Endothelial cell of umbilical vein (primary cell): ENCODE measurements at regions of chr1 and their contacts with region 1.

Region 1: DNA sequence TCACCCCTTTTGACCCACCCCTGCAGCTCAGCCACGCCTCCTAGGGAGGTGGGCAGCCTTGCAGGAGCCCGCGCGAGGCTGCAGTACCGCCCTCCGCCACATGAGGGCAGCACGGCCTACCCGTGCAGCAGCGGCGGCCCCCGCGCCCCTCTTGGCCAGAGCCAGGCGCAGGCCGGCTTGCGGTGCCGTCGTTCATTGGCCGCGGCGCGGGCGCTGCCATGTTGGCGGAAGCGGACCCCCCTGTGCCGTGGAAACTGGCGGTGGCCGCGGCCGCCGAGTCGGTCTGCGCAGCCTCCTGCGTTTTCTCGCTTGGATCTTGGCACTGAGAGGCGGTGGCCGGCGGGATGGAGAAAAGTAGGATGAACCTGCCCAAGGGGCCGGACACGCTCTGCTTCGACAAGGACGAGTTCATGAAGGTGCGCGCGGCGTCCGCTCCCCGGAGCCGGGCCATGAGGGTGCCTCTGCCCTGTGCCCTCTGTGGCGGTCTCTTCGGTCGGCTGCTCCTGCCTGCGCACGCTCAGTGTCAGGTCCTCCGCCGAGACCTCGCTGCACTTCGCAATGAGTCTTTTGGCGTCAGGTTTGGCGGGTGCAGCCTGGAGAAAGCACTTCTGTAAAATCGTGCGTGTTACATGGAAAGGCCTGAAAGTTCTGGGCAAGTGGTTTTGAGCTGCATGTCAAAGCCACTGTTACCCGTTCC is at the start of gene COG2:
- DNase-seq: peak; percentile 94
- H3K4me3 ChIP-seq: peak within 1 kb of the TSS; percentile 4 to 95 (median 47)
- H3K27ac ChIP-seq: no peak within 1 kb of the TSS
- H3K4me1 ChIP-seq: peaks cover 12% of the 10 kb centered on the region
- H3K27me3 ChIP-seq: peaks cover 6 to 8% of the 10 kb centered on the region in 2 experiments
- CTCF ChIP-seq: peak; percentile 100
- POLR2A ChIP-seq: peak; percentile 65
- total RNA-seq, gene COG2: 20.7 and 24.2 TPM in 2 replicates

Region 2: DNA sequence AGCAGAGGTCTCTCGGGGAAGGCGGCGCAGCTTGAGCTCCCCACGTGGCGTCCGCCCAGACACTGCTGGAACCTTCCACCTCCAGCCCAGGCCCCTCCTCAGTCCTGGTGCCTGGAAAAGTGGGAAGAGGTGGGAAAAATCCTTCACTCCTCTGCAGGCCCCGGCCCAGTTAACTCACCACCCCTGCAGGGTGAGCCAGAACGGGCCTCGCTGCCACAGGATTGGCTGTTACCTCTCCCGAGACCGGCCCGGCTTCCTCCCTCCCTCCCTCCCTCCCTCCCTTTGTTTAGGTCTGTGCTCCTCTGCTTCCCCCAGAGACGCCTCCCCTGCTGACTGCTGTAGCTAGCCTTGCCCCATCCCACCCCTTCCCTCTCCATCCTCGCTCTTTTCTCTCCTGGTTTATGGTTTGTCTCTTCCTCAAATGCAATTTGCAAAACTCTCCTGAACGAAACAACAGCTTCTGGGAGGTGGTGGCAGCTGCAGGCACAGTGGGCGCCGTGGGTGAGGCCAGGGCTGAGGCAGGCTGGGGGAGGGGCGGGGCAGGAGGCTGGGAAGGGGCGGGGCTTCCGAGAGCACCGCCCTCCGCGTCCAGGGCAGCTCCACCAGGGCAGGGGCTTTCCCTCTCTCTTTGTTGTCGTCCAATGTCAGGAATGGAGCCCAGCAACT is 111.3 kb after region 1 on chr1:
- CTCF ChIA-PET with region 1: no interaction called
- POLR2A ChIA-PET with region 1: no interaction called
- dilution Hi-C with region 1: no loop called
- intact Hi-C with region 1: loop called (anchors 2 kb)
- DNase-seq: peak; percentile 41
- H3K4me3 ChIP-seq: peak overlapping the region in 1 of 3 experiments; percentile 7
- H3K27ac ChIP-seq: no peak overlapping the region
- H3K4me1 ChIP-seq: no peaks in the 10 kb centered on the region
- H3K27me3 ChIP-seq: no peaks in the 10 kb centered on the region
- CTCF ChIP-seq: no peak
- POLR2A ChIP-seq: no peak

Region 3: DNA sequence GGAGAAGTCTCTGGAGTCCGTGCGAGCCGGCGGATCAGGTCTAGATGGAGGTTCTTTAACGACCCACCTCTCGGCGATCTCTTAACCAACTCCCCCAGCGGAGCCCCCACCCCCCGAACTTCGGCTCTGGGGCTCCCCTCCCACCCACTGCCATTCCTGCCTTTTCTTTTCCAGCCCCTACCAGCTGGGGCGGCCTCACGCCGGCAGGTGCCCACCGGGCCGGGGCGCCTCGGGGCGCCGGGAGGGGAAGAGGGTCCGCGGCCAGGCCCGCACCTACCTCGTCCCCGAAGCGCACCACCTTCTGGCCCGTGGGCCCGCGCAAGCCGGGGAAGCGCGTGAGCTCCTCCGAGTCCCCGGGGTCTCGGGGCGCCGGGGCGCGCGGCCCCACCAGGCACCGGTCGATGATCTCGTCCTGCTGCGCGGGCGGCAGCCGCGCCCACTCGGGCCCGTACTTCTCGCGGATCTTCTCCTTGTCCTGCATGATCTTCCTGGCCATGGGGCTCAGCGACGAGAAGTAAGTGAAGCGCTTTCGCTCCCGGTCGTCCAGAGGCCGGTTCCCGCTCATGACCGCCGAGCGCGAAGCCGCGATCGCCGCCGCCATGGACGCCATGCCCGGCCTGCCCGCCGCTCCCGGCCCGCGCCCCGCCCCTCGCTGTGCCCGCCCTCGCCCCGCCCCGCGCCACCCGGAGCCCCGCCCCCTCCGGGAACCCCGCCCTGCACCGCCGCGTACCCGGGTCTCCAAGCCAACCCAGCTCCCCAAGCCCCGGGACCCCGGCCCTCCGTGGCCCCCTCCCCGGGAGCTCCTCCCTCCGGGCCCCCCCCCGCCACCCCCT is 225.7 kb after region 1 on chr1 and contains the start of gene C1orf198:
- CTCF ChIA-PET with region 1: no interaction called
- POLR2A ChIA-PET with region 1: interaction called, 5 read pairs
- dilution Hi-C with region 1: no loop called
- intact Hi-C with region 1: loop called (anchors 2 kb)
- DNase-seq: peak; percentile 60
- H3K4me3 ChIP-seq: peak within 1 kb of the TSS; percentile 70 to 93 (median 83)
- H3K27ac ChIP-seq: peak within 1 kb of the TSS; percentile 33
- H3K4me1 ChIP-seq: peaks cover 20% of the 10 kb centered on the region
- H3K27me3 ChIP-seq: no peaks in the 10 kb centered on the region
- CTCF ChIP-seq: no peak
- POLR2A ChIP-seq: peak; percentile 65
- total RNA-seq, gene C1orf198: 27.7 and 29.2 TPM in 2 replicates

Region 4: DNA sequence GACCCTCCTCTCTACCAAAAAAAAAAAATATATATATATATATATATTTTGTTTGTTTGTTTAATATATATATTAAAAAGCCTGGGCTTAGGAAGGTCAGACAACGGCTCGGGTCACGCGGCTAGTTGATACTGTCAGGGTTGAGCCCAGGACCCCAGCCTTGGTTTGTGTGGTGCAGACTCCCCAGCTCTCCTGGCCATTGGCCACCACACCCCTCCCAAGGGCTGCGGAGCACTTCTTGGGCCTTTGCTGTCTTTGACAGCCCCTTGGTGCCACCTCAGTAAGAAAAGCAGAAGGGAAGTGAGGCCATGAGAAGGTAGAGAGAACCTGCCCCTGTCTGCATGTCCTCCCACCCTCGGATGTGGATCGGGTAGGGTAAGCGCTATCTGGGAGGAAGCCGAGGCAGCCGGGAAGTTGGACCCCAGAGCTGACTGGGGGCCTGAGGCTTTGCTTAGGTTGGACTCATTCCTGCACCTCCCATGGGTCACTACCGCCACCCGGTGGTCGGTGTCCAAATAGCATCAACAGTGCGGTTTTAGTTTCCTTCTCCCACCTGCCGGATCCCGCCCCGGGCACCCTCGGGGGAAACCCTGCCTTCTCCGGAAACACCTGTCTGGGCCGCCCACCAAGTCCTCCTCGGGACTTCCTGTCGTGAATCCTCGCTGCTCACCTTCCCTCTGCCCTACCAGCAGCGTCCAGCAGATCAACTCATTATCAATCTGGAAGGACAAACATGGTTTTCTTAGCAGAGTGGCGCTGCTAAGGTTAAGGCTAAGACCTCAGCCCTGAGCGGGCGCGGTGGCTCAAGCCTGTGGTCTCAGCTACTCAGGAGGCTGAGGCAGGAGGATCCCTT is 568.8 kb after region 1 on chr1:
- CTCF ChIA-PET with region 1: interaction called, 3 read pairs
- POLR2A ChIA-PET with region 1: no interaction called
- dilution Hi-C with region 1: no loop called
- intact Hi-C with region 1: loop called (anchors 1 kb)
- DNase-seq: peak; percentile 76
- H3K4me3 ChIP-seq: peak overlapping the region; percentile 6 to 52 (median 37)
- H3K27ac ChIP-seq: no peak overlapping the region
- H3K4me1 ChIP-seq: peaks cover 2% of the 10 kb centered on the region
- H3K27me3 ChIP-seq: peaks cover 0 to 5% of the 10 kb centered on the region in 2 experiments
- CTCF ChIP-seq: peak; percentile 84 to 90
- POLR2A ChIP-seq: no peak

Region 5: GRCh38 chr1:231828182-231828920 is 1185.9 kb after region 1 on chr1:
- CTCF ChIA-PET with region 1: no interaction called
- POLR2A ChIA-PET with region 1: no interaction called
- dilution Hi-C with region 1: no loop called
- intact Hi-C with region 1: loop called (anchors 5 kb)
- DNase-seq: peak; percentile 96
- H3K4me3 ChIP-seq: no peak overlapping the region
- H3K27ac ChIP-seq: peak overlapping the region; percentile 92
- H3K4me1 ChIP-seq: peaks cover 29% of the 10 kb centered on the region
- H3K27me3 ChIP-seq: no peaks in the 10 kb centered on the region
- CTCF ChIP-seq: no peak
- POLR2A ChIP-seq: no peak